ENCODE measurements at regions of chr2 and their contacts with region 1.

Region 1: DNA sequence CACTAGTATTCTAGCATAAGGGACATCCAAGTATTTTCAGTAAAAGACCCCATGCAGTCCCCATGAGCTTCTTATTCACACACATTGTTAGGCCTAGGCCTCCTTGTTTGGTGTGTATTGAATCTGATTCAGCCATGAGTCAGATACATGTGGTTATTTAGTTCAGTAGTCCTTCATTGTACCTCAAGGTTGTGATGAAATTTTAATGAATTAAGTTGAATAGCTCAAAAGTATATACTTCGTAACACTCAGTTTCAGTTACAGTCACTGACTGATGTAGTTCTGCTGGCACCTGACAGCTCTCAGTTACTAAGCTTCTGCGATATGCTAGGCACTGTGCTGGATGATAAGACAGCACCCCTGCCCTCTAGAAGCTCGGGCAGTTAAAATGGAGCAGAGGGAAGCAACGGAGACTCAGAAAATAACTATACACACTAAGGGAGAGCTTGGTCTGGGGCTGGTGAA is 86.4 kb downstream of the XRCC5 start:
- DNase-seq: peak; percentile 61
- H3K4me3 Mint-ChIP-seq: no peak overlapping the region
- H3K27ac Mint-ChIP-seq: peak overlapping the region; percentile 80
- H3K4me1 Mint-ChIP-seq: peaks cover 54% of the 10 kb centered on the region
- H3K27me3 Mint-ChIP-seq: no peaks in the 10 kb centered on the region

Region 2: DNA sequence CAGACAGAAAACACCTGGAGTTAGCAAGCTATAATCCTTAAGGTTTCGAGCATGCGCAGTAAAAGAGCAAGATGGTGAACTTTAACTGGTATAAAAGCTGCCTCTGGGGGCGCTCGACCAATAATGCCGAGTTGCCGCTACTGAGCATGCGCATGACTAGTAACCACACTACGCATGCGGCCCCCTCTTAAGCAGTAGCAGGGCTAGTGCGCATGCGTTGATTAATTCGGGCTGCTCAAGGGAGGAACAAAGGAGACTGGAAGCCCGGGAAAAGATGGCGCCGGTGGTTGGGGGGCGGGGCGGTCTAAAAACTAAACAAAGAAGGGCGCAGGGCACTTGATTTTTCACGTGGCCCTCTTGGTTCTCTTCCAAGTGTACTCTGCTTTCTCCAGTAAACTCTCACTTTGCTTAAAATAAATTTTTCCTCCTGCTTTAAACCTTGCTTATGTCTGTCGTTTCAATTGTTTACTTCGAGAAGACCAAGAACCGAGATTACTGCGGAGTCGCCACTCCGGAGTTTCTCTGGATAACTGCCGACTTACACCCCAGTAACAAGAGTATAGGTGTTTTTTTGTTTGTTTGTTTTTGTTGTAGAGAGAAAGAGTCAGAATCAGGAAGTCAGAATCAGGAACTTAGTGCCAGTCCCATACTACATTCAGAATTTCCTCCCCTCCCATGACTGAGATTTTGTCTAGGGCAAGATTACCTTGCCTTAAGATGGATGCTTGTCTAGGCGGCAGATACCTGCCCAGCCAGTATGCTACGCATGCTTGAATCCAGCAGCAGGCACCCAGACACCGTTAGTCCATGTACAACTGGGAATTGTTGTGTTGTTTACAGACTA is 80.7 kb before region 1 on chr2:
- CTCF ChIA-PET with region 1: interaction called, 3 read pairs
- intact Hi-C with region 1: loop called (anchors 1 kb)
- DNase-seq: peak; percentile 99
- H3K4me3 Mint-ChIP-seq: peak overlapping the region; percentile 89
- H3K27ac Mint-ChIP-seq: peak overlapping the region; percentile 99
- H3K4me1 Mint-ChIP-seq: peaks cover 91% of the 10 kb centered on the region
- H3K27me3 Mint-ChIP-seq: no peaks in the 10 kb centered on the region

Region 3: DNA sequence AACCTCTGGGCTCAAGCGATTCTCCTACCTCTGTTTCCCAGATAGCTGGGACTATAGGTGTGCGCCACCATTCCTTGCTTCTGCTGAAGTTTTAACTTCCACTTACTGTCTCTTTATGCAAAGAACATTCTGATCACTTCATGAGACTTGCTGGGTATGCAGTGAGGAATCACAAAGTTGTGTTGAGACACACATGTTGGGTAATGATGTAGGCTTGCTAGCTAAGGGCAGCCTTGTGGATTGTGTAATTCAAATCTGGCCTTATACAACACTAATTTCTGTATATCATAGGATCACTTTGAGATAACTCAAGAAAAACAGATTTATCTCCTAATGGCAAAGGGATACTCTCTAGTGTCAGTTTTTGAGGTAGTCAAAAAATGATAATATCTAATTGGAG is 62.2 kb before region 1 on chr2:
- CTCF ChIA-PET with region 1: no interaction called
- intact Hi-C with region 1: loop called (anchors 2 kb)
- DNase-seq: no peak
- H3K4me3 Mint-ChIP-seq: no peak overlapping the region
- H3K27ac Mint-ChIP-seq: peak overlapping the region; percentile 80
- H3K4me1 Mint-ChIP-seq: peaks cover 61% of the 10 kb centered on the region
- H3K27me3 Mint-ChIP-seq: no peaks in the 10 kb centered on the region

Region 4: GRCh38 chr2:216216951-216217903 is 21.6 kb after region 1 on chr2:
- CTCF ChIA-PET with region 1: interaction called, 3 read pairs
- intact Hi-C with region 1: loop called (anchors 1 kb)
- DNase-seq: peak; percentile 47
- H3K4me3 Mint-ChIP-seq: no peak overlapping the region
- H3K27ac Mint-ChIP-seq: peak overlapping the region; percentile 37
- H3K4me1 Mint-ChIP-seq: peaks cover 28% of the 10 kb centered on the region
- H3K27me3 Mint-ChIP-seq: no peaks in the 10 kb centered on the region

Region 5: DNA sequence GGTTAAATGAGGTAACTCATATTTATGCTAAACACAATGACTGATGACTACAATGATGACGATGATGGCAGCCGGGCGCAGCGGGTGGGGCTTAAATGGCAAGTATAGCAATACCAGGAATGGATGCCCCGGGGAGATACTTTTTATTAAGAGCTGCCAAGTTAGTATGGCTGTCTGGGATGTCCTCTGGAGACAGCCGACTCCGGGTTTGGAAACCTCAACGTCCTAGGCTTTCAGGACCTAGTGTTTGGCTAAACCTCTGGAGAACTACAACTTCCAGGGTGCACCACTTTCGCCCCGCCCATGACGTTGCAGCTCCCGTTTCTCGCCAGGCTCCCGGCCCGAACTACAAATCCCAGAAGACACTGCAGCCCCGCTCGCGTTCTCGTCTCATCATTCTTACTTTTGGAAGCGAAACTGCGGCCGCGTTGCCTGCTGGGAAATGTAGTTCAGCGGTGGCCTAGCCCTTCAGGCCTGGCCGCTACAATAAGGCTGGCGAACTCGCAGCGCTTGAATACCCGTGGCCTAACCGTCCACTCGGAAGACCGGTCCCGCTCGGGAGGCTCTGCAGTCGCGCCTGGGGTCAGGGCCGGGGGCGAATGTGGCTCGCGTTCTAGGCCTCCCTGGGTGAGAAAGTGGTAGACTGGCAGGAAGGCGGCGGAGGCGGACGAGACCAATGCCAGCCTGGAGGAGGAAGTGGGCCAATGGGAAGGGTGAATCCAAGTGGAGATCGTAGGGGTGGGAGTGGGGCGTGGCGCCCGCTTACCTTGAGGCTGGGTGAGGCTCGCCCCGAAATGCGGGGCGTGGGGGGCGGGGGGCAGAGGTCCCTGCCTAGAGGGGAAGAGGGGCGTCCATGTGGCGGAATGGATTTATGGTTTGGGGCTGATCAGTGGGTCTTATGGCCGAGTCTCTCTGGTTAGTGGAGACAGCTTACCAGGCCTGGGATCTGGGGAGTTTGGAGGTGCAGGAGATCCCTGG is 216.7 kb after region 1 on chr2 and contains the start of gene SMARCAL1:
- CTCF ChIA-PET with region 1: no interaction called
- intact Hi-C with region 1: loop called (anchors 1 kb)
- DNase-seq: peak; percentile 100
- H3K4me3 Mint-ChIP-seq: peak within 1 kb of the TSS; percentile 92
- H3K27ac Mint-ChIP-seq: peak within 1 kb of the TSS; percentile 90
- H3K4me1 Mint-ChIP-seq: peaks cover 6% of the 10 kb centered on the region
- H3K27me3 Mint-ChIP-seq: no peaks in the 10 kb centered on the region
- total RNA-seq, gene SMARCAL1: 17.0 to 18.2 TPM

Measured in activated naive CD4-positive, alpha-beta T cell treated with anti-CD3 and anti-CD28 coated beads for 36 hours (primary cell).